Calu3 (cell line): ENCODE measurements at regions of chr14 and their contacts with region 1.

Region 1: GRCh38 chr14:37709419-37710195 is 114.2 kb downstream of the TTC6 start:
- DNase-seq: no peak
- H3K4me3 Mint-ChIP-seq: no peak overlapping the region
- H3K27ac Mint-ChIP-seq: no peak overlapping the region
- H3K4me1 Mint-ChIP-seq: peaks cover 22% of the 10 kb centered on the region
- H3K27me3 Mint-ChIP-seq: no peaks in the 10 kb centered on the region
- CTCF ChIP-seq: peak; percentile 22

Region 2: GRCh38 chr14:37729218-37729617 is 19.6 kb after region 1 on chr14:
- CTCF ChIA-PET with region 1: no interaction called
- intact Hi-C with region 1: no loop called
- DNase-seq: no peak
- H3K4me3 Mint-ChIP-seq: no peak overlapping the region
- H3K27ac Mint-ChIP-seq: no peak overlapping the region
- H3K4me1 Mint-ChIP-seq: no peaks in the 10 kb centered on the region
- H3K27me3 Mint-ChIP-seq: no peaks in the 10 kb centered on the region
- CTCF ChIP-seq: no peak

Region 3: DNA sequence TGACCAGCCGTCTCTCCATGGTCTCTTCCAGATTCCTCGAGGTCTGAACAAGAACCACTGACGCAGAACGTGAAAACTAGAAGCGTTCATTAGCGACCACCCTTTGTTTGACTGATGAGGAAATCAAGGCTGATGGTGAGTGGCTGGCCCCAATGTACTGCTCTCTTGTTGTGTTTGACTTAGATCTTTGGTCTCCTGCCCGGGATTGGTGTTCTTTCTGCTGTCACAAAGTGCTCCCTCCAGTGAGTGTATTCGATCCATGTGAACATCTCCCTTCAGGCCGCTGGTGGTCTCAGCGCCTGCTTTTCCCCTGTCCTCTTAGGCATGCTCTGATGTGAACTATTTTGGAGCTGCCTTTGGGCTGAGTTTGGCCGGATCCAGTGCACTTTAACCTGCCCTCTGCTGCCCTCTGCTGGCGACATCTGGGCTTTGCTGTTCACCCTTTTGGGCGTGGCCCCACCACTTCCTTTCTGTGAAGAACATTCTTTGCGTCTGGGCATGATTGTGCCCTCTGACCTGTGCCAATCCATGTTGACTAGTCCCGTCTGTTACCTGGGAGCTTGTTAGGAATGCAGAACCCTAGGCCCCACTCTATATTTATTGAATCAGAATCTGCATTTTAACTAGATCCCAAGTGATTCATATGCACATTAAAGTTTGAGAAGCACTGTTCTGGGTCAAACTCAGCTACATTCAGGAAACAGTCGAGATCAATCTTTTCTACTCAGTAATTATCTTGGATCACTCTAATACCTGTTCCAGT is 165.0 kb after region 1 on chr14:
- CTCF ChIA-PET with region 1: interaction called, 41 read pairs
- intact Hi-C with region 1: loop called (anchors 1 kb)
- DNase-seq: peak; percentile 90
- H3K4me3 Mint-ChIP-seq: no peak overlapping the region
- H3K27ac Mint-ChIP-seq: peak overlapping the region; percentile 61
- H3K4me1 Mint-ChIP-seq: peaks cover 23% of the 10 kb centered on the region
- H3K27me3 Mint-ChIP-seq: no peaks in the 10 kb centered on the region
- CTCF ChIP-seq: peak; percentile 66

Region 4: DNA sequence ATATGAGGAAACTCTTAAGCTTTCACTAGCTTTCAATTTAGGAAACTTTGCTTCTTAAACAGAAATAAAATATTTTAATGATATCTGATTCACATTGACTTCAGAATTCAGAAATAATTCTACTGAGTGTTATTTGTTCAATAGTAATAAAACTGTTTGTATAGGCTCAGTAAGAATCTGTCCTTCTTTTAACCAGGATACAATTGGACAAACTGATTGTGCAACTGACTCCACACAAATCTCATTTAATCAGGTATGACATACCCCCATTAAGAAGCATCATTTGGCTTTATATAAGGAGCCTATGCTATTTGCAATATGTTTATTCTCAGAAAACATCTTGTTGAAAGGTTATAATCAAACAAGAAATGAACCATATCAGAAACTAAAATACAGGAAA is 206.7 kb after region 1 on chr14:
- CTCF ChIA-PET with region 1: no interaction called
- intact Hi-C with region 1: no loop called
- DNase-seq: no peak
- H3K4me3 Mint-ChIP-seq: no peak overlapping the region
- H3K27ac Mint-ChIP-seq: no peak overlapping the region
- H3K4me1 Mint-ChIP-seq: no peaks in the 10 kb centered on the region
- H3K27me3 Mint-ChIP-seq: no peaks in the 10 kb centered on the region
- CTCF ChIP-seq: no peak

Region 5: DNA sequence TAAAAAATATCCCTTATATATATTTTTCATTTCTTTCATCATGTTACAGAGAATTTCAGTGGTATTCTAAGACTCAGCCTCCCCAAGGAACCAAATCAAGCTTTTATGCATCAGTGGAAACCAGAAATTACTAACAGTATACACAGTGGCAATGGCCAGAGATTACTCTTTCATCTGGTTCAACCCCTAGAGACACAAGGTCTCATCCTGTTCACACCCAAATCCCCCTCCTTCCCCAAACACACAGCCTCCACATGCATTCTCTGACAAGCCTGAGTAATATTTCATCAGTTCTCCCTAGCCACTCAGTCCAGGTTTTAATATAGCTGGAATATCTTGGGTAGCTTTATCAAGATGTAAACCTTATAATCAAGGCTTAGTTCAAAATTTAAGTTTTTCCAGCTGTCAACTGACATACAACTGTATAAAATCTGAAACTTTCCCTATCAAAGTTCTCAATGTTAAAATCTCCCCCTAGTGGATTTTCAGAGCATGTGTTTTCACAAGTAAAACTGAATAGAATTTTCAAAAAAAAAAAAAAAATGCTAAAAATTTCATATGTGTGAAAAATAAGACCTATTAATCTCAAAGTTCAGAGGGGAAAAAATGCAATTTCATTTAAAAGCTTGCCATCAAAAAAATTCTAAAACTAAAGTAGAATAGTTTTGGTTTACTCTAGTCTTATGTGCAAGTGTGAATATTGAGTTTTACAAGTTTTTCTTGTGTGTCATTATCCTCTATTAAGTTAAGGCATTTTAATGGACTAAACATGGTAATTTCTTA is 487.6 kb after region 1 on chr14:
- CTCF ChIA-PET with region 1: no interaction called
- intact Hi-C with region 1: loop called (anchors 10 kb)
- DNase-seq: no peak
- H3K4me3 Mint-ChIP-seq: no peak overlapping the region
- H3K27ac Mint-ChIP-seq: no peak overlapping the region
- H3K4me1 Mint-ChIP-seq: no peaks in the 10 kb centered on the region
- H3K27me3 Mint-ChIP-seq: peaks cover 8% of the 10 kb centered on the region
- CTCF ChIP-seq: peak; percentile 16

Region 6: DNA sequence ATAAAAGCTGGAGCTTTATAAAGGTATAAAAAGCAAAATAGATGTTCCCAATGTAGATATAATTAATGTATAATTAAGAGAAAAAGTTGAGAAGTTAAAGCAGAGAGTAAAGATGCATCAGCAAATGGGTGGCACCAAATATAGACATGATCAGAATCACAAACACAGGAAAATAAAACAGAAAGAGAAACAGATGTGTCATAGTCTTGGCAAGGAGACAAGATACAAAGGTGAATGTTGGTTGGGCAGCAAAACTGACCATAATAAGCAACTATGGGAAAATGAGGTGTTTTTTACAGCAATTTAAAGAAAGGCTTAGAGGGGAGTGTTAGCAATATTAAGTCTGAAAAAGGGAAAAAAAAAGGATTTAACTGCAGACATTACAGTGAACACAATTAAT is 681.7 kb after region 1 on chr14:
- CTCF ChIA-PET with region 1: interaction called, 12 read pairs
- intact Hi-C with region 1: no loop called
- DNase-seq: no peak
- H3K4me3 Mint-ChIP-seq: no peak overlapping the region
- H3K27ac Mint-ChIP-seq: no peak overlapping the region
- H3K4me1 Mint-ChIP-seq: no peaks in the 10 kb centered on the region
- H3K27me3 Mint-ChIP-seq: peaks cover 35% of the 10 kb centered on the region
- CTCF ChIP-seq: no peak